Gastrocnemius medialis (tissue), 4 donors: ENCODE measurements at regions of chrX and their contacts with region 1.

Region 1: GRCh38 chrX:13487731-13488523 is 81.5 kb upstream of the EGFL6 start:
- DNase-seq: no peak
- ATAC-seq: peak; percentile 70 to 72
- H3K4me3 ChIP-seq: no peak overlapping the region
- H3K27ac ChIP-seq: peak overlapping the region; percentile 42 to 68 (median 60)
- H3K4me1 ChIP-seq: peaks cover 6 to 7% of the 10 kb centered on the region in 2 donors
- H3K27me3 ChIP-seq: no peaks in the 10 kb centered on the region
- CTCF ChIP-seq: peak; percentile 49 to 57 (median 50)
- POLR2A ChIP-seq: no peak

Region 2: DNA sequence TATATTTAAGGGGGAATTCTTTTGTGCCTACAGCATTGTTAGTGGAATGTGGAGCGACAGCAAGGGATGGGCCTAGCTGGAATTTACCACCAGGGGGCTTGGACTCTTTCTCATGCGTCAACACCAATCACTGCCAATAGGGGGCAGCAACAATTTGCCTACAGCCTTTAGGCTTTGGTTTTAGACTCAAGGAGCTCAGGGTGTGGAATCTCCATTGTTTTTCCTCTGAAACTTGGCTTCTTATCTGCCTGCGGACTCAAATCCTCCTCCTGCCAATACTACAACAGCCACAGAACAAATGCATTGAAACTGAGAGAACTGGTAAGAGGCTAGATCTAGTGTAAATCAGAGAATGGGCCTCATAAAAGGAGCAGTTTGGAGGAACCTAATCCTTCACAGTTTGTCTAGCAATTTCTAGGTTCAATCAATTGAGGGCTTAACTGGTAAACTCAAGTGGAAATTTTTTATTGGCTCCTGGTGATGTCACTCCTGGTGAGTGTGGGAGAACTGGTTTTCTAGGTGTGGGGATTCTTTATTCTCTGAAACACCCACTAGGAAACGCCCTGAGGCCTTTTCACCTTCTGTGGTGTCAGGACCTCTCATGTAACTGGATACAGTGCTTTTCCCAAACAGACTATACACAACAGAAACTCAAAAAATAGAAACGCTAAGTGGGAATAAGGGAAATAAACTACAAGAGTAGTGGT is 540.9 kb before region 1 on chrX:
- in situ Hi-C with region 1: loop called (anchors 10 to 25 kb)
- intact Hi-C with region 1: loop called (anchors 1 kb)
- DNase-seq: peak; percentile 16 to 23
- ATAC-seq: peak; percentile 36 to 39
- H3K4me3 ChIP-seq: no peak overlapping the region
- H3K27ac ChIP-seq: peak overlapping the region in 3 of 4 donors; percentile 19 to 50 (median 43)
- H3K4me1 ChIP-seq: peaks cover 0 to 3% of the 10 kb centered on the region in 2 donors
- H3K27me3 ChIP-seq: no peaks in the 10 kb centered on the region
- CTCF ChIP-seq: peak; percentile 64 to 78 (median 72)
- POLR2A ChIP-seq: no peak

Region 3: DNA sequence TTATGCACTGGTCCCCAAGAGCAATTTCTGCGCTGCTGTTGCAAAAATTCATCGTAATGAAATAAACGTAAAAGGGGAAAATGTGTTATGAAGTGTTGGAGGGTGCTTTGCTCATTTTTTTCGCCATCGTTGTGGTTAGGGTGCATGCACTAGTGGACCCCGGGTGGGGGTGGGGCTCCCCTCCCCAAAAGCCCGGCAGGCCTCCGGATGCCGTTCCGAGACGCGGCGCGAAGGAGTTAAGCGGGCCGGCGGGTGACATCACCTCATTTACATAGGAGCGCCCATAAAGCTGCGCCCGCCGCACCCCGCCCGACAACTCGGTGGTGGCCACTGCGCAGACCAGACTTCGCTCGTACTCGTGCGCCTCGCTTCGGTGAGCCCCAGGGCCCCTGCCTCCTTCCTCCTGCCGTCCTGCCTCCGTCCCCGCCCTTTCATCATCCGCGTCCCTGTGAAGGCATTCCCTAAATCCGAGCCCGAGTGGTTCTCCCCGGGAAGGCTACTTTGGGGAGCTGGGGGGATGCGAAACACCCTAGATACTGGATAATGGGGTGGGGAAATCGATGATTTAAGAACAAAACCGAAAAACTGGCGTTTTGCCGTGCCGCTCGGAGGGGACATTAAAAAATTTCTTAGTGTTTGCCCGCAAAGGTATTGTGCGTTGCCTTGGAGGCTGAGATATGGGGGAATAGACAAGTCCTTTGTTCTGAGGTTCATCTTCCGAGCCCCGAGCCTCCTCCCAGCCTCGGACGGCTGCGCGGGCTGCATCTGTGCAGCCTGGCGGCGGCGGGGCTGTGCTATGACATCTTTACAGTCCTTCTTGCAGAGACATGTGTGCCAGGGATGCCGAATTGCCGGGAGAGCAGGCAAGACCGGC is 512.9 kb before region 1 on chrX and contains the start of gene TMSB4X:
- in situ Hi-C with region 1: loop called in 3 of 4 experiments (anchors 25 kb)
- intact Hi-C with region 1: loop called (anchors 2 kb)
- DNase-seq: peak; percentile 35 to 58
- ATAC-seq: peak in 1 of 2 donors; percentile 48
- H3K4me3 ChIP-seq: peak within 1 kb of the TSS; percentile 51 to 71 (median 67)
- H3K27ac ChIP-seq: peak within 1 kb of the TSS; percentile 72 to 84 (median 82)
- H3K4me1 ChIP-seq: no peaks in the 10 kb centered on the region
- H3K27me3 ChIP-seq: peaks cover 0 to 20% (median 10%) of the 10 kb centered on the region in 3 donors
- CTCF ChIP-seq: no peak
- POLR2A ChIP-seq: peak; percentile 61 to 84
- total RNA-seq, gene TMSB4X: 492 to 653 (median 526) TPM

Region 4: DNA sequence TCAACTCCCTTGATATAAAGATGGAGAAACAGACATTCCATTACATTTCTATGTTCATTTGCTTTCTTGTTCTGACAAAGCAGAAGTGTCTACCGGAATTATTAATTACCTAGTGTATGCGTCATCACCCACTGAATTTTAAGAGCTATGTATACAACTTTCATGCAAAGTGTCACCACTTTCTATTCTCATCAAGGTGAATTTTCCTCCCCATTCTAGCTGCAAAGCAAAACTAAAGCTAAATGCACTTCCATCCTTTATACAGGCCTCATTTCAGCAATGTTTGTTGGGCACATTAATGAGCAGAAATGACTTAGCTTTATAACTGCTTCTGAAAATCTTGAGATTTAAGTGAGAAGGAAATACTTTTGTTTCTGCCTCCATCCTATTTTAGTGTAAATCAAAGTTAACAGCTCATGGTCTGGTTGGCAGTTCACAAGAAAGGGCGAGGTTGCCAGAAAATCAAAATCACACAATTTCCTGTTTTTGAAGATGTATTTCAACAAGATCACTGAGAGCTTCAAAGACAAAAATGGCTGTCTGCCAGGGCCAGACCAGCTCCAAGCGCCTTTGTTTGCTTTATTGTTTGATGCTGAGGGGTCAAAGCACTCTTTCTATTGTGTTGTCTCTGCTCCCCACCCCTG is 436.3 kb before region 1 on chrX:
- in situ Hi-C with region 1: loop called in 1 of 4 experiments (anchors 25 kb)
- intact Hi-C with region 1: no loop called
- DNase-seq: peak in 1 of 2 donors; percentile 2
- ATAC-seq: no peak
- H3K4me3 ChIP-seq: no peak overlapping the region
- H3K27ac ChIP-seq: peak overlapping the region in 1 of 4 donors; percentile 31
- H3K4me1 ChIP-seq: no peaks in the 10 kb centered on the region
- H3K27me3 ChIP-seq: no peaks in the 10 kb centered on the region
- CTCF ChIP-seq: no peak
- POLR2A ChIP-seq: no peak

Region 5: DNA sequence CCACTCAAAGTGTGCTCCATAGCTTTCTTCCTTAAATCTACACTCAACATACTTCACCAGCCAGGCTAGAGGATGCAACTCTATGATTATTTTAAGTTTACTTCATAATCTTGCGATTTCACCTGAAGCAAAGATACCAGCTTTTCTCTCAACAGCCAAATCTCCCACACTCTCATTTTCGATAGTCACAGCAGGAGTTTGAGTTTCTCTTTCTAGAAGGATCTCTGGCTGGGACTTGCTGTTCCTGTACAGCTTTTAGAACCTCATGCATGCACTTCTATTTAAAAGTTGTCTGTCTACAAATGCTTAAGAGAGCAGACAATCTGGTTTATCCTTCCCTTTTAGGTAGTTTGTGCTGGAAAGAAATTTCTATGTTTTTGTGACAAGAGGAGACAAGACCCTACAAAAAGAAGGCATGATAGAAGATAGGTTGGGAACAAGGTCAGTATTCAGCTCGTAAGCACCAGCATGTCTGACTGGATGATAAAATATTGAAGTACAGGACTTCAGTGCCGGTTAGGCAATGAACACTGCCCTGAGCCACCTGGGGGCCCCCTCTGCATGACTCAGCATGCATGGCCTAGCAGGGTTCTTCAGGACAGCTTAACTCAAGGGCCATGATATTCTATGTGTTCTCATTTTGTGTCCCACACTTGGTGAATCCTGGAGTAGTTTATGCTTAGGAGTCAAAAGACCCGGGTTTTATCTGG is 233.7 kb before region 1 on chrX:
- in situ Hi-C with region 1: loop called in 1 of 4 experiments (anchors 25 kb)
- intact Hi-C with region 1: no loop called
- DNase-seq: peak in 1 of 2 donors; percentile 10
- ATAC-seq: no peak
- H3K4me3 ChIP-seq: no peak overlapping the region
- H3K27ac ChIP-seq: no peak overlapping the region
- H3K4me1 ChIP-seq: no peaks in the 10 kb centered on the region
- H3K27me3 ChIP-seq: no peaks in the 10 kb centered on the region
- CTCF ChIP-seq: no peak
- POLR2A ChIP-seq: no peak

Region 6: GRCh38 chrX:13317366-13317765 is 170.6 kb before region 1 on chrX:
- in situ Hi-C with region 1: no loop called
- intact Hi-C with region 1: no loop called
- DNase-seq: no peak
- ATAC-seq: no peak
- H3K4me3 ChIP-seq: no peak overlapping the region
- H3K27ac ChIP-seq: no peak overlapping the region
- H3K4me1 ChIP-seq: no peaks in the 10 kb centered on the region
- H3K27me3 ChIP-seq: no peaks in the 10 kb centered on the region
- CTCF ChIP-seq: no peak
- POLR2A ChIP-seq: no peak

Region 7: DNA sequence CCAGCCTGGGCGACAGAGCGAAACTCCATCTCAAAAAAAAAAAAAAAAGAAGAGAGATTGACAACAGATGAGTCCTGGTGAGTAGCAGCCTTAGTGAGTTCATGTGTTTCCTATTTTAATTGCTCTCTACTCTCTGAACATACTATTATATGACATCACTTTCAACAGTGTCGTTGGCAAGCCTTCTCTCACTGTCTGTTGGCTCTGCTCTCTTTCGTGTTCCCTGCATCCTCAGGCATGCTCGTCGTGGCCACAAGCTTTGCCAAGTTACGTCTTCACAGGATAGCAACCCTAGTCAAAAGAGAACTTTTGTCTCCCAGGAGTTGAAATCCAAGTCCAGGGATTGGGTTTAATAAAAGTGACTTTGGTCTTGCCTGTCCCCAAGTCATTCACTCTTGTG is 35.6 kb before region 1 on chrX:
- in situ Hi-C with region 1: no loop called
- intact Hi-C with region 1: no loop called
- DNase-seq: no peak
- ATAC-seq: no peak
- H3K4me3 ChIP-seq: no peak overlapping the region
- H3K27ac ChIP-seq: no peak overlapping the region
- H3K4me1 ChIP-seq: no peaks in the 10 kb centered on the region
- H3K27me3 ChIP-seq: no peaks in the 10 kb centered on the region
- CTCF ChIP-seq: no peak
- POLR2A ChIP-seq: no peak